ENCODE measurements at regions of chr5 and their contacts with region 1.

Region 1: GRCh38 chr5:98905857-98906690 is 22.7 kb downstream of the CHD1 start:
- DNase-seq: peak in 3 of 14 experiments; percentile 74 to 76 (median 75)
- ATAC-seq: peak; percentile 68
- H3K4me3 ChIP-seq: no peak overlapping the region
- H3K4me3 Mint-ChIP-seq: no peak overlapping the region
- H3K27ac ChIP-seq: no peak overlapping the region
- H3K27ac Mint-ChIP-seq: peak overlapping the region; percentile 13
- H3K4me1 ChIP-seq: peaks cover 2% of the 10 kb centered on the region
- H3K4me1 Mint-ChIP-seq: peaks cover 46% of the 10 kb centered on the region
- H3K27me3 ChIP-seq: no peaks in the 10 kb centered on the region
- H3K27me3 Mint-ChIP-seq: no peaks in the 10 kb centered on the region
- CTCF ChIP-seq: peak; percentile 88

Region 2: DNA sequence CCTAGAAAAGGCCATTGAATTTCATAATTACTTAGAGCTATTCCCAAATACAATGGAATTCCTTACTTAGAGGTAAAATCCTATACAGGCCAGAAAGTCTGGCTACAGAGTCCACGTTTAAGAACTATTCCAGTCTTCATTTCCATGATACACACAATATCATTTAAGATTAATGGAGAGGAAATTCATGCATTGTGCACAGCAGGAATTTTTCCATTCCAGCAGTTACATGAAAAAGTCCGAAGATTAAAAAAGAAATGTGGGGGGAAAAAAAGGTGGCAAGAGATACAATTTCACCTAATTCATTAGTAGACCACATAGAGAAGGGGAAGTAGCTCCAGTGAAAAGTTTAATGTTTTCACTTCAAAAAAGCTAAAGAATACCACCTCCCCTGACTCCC is 40.4 kb before region 1 on chr5:
- CTCF ChIA-PET with region 1: interaction called, 3 read pairs
- POLR2A ChIA-PET with region 1: no interaction called
- intact Hi-C with region 1: loop called in 1 of 2 experiments (anchors 5 kb)
- DNase-seq: no peak
- ATAC-seq: no peak
- H3K4me3 ChIP-seq: no peak overlapping the region
- H3K4me3 Mint-ChIP-seq: no peak overlapping the region
- H3K27ac ChIP-seq: no peak overlapping the region
- H3K27ac Mint-ChIP-seq: no peak overlapping the region
- H3K4me1 ChIP-seq: no peaks in the 10 kb centered on the region
- H3K4me1 Mint-ChIP-seq: no peaks in the 10 kb centered on the region
- H3K27me3 ChIP-seq: no peaks in the 10 kb centered on the region
- H3K27me3 Mint-ChIP-seq: no peaks in the 10 kb centered on the region
- CTCF ChIP-seq: no peak

Measured in CD4-positive, alpha-beta T cell (primary cell).